Activated CD4-positive, alpha-beta T cell treated with anti-CD3 and anti-CD28 coated beads for 36 hours (primary cell): ENCODE measurements at regions of chr18 and their contacts with region 1.

Region 1: DNA sequence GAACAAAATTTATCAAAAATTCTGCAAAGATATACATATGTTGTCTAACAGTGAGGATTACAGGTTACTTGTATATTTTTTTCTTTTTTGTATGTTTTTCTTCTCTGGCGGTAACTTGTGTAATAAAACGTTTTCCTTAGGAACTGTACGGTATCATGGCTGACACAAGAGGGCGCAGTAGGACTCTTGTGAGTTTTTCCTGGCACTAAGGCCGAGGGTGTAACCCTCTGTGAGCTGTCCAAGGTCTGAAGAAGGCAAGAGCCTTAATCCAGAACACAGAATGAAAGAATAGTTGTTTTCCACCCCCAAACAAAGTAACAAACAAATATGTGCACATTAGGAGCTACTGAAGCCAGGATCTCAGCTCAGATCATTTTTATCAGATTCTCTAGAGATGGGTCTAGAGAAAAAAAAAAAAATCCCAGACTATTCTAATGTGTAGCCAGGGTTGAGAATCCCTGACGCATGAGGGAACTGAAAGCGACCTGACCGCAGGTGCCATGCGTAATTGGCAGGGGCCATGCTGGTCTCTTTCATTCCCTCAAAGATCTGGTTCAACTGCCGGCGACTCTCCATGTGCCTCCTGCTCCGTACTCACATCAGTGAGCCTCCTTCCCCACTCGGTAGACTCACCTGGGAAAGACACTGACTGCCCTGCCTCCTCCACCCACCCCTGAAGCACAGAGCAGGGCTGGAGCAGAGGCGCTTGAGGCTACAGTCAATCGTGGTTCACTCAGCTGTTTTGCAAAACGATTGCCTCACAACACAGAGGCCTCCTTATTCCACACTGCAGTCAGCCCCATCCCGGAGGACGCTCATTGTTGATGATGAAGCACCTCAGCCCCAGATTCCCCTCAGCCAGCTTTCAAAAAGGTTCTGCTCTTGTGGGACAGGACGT is 26.9 kb downstream of the TMEM200C start:
- DNase-seq: peak; percentile 72
- ATAC-seq: peak; percentile 39
- H3K4me3 Mint-ChIP-seq: no peak overlapping the region
- H3K27ac Mint-ChIP-seq: no peak overlapping the region
- H3K4me1 Mint-ChIP-seq: no peaks in the 10 kb centered on the region
- H3K27me3 Mint-ChIP-seq: peaks cover 6% of the 10 kb centered on the region

Region 2: GRCh38 chr18:5909130-5909529 is 40.7 kb after region 1 on chr18:
- CTCF ChIA-PET with region 1: no interaction called
- POLR2A ChIA-PET with region 1: no interaction called
- intact Hi-C with region 1: no loop called
- DNase-seq: no peak
- ATAC-seq: no peak
- H3K4me3 Mint-ChIP-seq: no peak overlapping the region
- H3K27ac Mint-ChIP-seq: no peak overlapping the region
- H3K4me1 Mint-ChIP-seq: no peaks in the 10 kb centered on the region
- H3K27me3 Mint-ChIP-seq: peaks cover 14% of the 10 kb centered on the region

Region 3: GRCh38 chr18:6219116-6219717 is 350.8 kb after region 1 on chr18:
- CTCF ChIA-PET with region 1: no interaction called
- POLR2A ChIA-PET with region 1: interaction called, 3 read pairs
- intact Hi-C with region 1: loop called in 1 of 2 experiments (anchors 1 kb)
- DNase-seq: peak; percentile 46
- ATAC-seq: no peak
- H3K4me3 Mint-ChIP-seq: no peak overlapping the region
- H3K27ac Mint-ChIP-seq: no peak overlapping the region
- H3K4me1 Mint-ChIP-seq: no peaks in the 10 kb centered on the region
- H3K27me3 Mint-ChIP-seq: peaks cover 3% of the 10 kb centered on the region

Region 4: DNA sequence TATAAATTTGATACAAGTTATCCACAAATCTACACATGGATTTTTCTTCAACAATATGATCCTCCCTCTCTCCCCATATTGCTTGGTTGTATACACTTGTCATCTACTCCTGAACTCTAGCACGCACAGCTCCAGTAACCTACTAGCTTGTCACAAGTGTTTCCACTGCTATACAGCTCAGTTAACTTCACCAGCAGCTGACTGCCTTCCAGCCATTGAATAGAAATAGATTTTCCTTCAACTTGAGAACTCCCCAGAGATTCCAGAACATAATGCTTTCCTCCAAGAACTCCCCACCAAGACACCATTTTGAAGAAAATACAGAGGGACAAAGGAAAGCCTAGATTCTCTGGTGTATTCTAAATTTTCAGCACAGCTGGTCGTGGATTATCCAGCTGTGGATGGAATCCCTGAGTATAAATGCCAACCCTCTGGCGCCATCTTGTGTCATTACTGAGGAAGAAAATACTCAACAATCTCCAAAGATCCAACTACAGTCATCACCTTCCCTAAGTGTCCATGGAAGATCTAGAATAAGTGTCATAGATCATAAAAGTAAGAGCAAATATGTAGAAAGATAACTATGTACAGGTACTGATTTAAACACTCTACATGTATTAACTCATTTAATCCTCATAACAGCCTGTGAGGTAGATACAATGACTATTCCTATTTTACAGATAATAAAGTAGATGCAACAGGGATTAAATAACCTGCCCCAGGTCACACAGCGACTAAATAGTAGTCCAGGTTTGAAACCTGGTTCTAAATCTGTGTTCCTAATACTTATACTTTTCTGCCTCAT is 1017.7 kb after region 1 on chr18:
- CTCF ChIA-PET with region 1: no interaction called
- POLR2A ChIA-PET with region 1: no interaction called
- intact Hi-C with region 1: loop called in 1 of 2 experiments (anchors 5 kb)
- DNase-seq: peak; percentile 34
- ATAC-seq: no peak
- H3K4me3 Mint-ChIP-seq: no peak overlapping the region
- H3K27ac Mint-ChIP-seq: no peak overlapping the region
- H3K4me1 Mint-ChIP-seq: no peaks in the 10 kb centered on the region
- H3K27me3 Mint-ChIP-seq: peaks cover 2% of the 10 kb centered on the region